Esophagus muscularis mucosa (tissue), 4 donors: ENCODE measurements at regions of chr16 and their contacts with region 1.

Region 1: GRCh38 chr16:527006-527753 is at the start of gene CAPN15:
- DNase-seq: peak; percentile 95
- H3K4me3 ChIP-seq: peak within 1 kb of the TSS; percentile 70 to 96 (median 88)
- H3K27ac ChIP-seq: peak within 1 kb of the TSS; percentile 97 to 99 (median 98)
- H3K4me1 ChIP-seq: peaks cover 44 to 68% (median 58%) of the 10 kb centered on the region in 4 donors
- H3K27me3 ChIP-seq: no peaks in the 10 kb centered on the region
- CTCF ChIP-seq: peak in 1 of 3 experiments; percentile 43
- EP300 ChIP-seq: no peak
- POLR2A ChIP-seq: peak; percentile 80
- total RNA-seq, gene CAPN15: 24.9 to 44.7 (median 43.3) TPM

Region 2: GRCh38 chr16:228818-229730 is 298.1 kb before region 1 on chr16 and contains the start of gene LUC7L:
- intact Hi-C with region 1: no loop called
- DNase-seq: peak; percentile 94
- H3K4me3 ChIP-seq: peak within 1 kb of the TSS; percentile 74 to 89 (median 83)
- H3K27ac ChIP-seq: peak within 1 kb of the TSS; percentile 97 to 99 (median 98)
- H3K4me1 ChIP-seq: peaks cover 14 to 35% (median 28%) of the 10 kb centered on the region in 4 donors
- H3K27me3 ChIP-seq: no peaks in the 10 kb centered on the region
- CTCF ChIP-seq: no peak
- EP300 ChIP-seq: no peak
- POLR2A ChIP-seq: peak; percentile 94
- total RNA-seq, gene LUC7L: 34.8 to 60.6 (median 50.2) TPM

Region 3: DNA sequence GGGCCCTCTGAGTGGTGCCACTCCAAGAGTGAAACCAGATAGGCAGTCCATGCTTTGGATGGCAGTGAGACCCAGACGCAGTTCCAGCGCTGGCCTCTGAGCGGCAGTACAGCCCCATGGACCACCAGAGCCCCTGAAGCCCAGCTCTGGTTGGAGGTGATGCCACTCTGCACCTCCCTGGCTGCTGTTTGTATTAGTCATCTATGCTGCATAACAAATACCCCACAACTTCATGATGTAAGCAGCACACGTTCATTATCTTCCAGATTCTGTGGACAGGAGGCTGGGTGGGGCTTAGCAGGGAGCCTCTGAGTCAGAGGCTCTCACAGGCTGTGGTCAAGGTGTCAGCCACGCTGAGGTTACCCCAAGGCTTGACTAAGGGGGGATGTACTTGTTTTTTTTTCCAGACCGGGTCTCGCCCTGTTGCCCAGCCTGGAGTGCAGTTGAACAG is 135.3 kb before region 1 on chr16:
- intact Hi-C with region 1: loop called (anchors 10 kb)
- DNase-seq: no peak
- H3K4me3 ChIP-seq: no peak overlapping the region
- H3K27ac ChIP-seq: no peak overlapping the region
- H3K4me1 ChIP-seq: peaks cover 13 to 32% (median 22%) of the 10 kb centered on the region in 4 donors
- H3K27me3 ChIP-seq: no peaks in the 10 kb centered on the region
- CTCF ChIP-seq: peak; percentile 54 to 78 (median 76)
- EP300 ChIP-seq: no peak
- POLR2A ChIP-seq: no peak

Region 4: GRCh38 chr16:425082-425718 is 102.0 kb before region 1 on chr16 and contains the start of gene RAB11FIP3:
- intact Hi-C with region 1: loop called (anchors 10 kb)
- DNase-seq: peak; percentile 94
- H3K4me3 ChIP-seq: peak within 1 kb of the TSS; percentile 80 to 87 (median 82)
- H3K27ac ChIP-seq: peak within 1 kb of the TSS; percentile 91 to 97 (median 94)
- H3K4me1 ChIP-seq: peaks cover 26 to 64% (median 61%) of the 10 kb centered on the region in 4 donors
- H3K27me3 ChIP-seq: no peaks in the 10 kb centered on the region
- CTCF ChIP-seq: peak in 2 of 3 experiments; percentile 17 to 18
- EP300 ChIP-seq: no peak
- POLR2A ChIP-seq: peak; percentile 83
- total RNA-seq, gene RAB11FIP3: 50.3 to 77.9 (median 58.8) TPM